PC-9 (cell line): ENCODE measurements at regions of chr4 and their contacts with region 1.

Region 1: GRCh38 chr4:40401631-40402030 is 66.5 kb downstream of the CHRNA9 start:
- DNase-seq: no peak
- H3K4me3 ChIP-seq: no peak overlapping the region
- H3K27ac ChIP-seq: no peak overlapping the region
- H3K4me1 ChIP-seq: peaks cover 50% of the 10 kb centered on the region
- H3K27me3 ChIP-seq: no peaks in the 10 kb centered on the region
- CTCF ChIP-seq: no peak

Region 2: DNA sequence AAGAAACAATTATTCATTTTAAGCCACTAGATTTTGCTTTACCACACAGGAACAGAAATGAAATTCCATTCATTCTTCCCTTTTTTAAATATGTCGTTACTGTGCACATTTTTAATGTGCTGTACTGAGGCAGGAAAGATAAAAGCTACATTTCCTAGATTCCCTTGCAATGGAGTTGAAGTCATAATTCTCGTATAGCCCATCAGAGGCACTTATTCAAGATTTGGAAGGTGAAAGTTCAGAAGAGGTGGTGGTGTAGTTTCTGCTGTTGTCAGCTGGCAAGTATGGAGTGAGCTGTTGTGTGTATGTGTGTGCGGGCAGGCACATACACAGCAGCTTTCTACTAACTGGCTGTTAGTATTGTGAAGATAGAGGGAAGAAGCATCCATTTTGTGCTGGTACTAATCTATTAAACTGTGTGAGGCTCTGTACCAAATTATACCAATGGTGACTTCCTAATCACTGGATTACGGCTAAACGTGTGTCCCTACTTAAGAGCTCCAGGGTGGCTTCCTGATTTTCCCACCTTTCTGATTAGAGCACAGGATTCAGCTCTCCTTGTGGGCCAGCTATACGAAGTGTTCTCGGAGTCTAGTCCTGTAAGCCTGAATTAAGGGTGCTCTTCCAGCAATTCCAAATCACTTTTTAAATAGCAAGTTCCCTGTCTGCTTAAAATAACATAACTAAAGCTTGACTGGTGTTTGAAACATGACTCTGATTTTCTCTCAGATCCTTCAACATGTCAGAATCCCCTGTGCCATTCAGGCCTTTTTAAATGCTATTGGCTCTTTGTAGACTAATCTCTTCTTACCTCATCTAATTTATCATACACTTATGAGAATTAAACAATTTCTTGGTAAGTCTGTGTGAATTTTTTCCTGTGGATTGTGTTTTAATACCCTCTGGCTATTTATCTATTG is 467.7 kb before region 1 on chr4:
- CTCF ChIA-PET with region 1: no interaction called
- POLR2A ChIA-PET with region 1: no interaction called
- intact Hi-C with region 1: no loop called
- DNase-seq: no peak
- H3K4me3 ChIP-seq: no peak overlapping the region
- H3K27ac ChIP-seq: no peak overlapping the region
- H3K4me1 ChIP-seq: no peaks in the 10 kb centered on the region
- H3K27me3 ChIP-seq: no peaks in the 10 kb centered on the region
- CTCF ChIP-seq: no peak

Region 3: GRCh38 chr4:40255393-40256281 is 146.0 kb before region 1 on chr4:
- CTCF ChIA-PET with region 1: no interaction called
- POLR2A ChIA-PET with region 1: no interaction called
- intact Hi-C with region 1: no loop called
- DNase-seq: peak; percentile 43 to 95
- H3K4me3 ChIP-seq: no peak overlapping the region
- H3K27ac ChIP-seq: peak overlapping the region; percentile 52
- H3K4me1 ChIP-seq: peaks cover 50% of the 10 kb centered on the region
- H3K27me3 ChIP-seq: no peaks in the 10 kb centered on the region
- CTCF ChIP-seq: no peak

Region 4: GRCh38 chr4:40333921-40334352 is 67.7 kb before region 1 on chr4:
- CTCF ChIA-PET with region 1: no interaction called
- POLR2A ChIA-PET with region 1: interaction called, 3 read pairs
- intact Hi-C with region 1: loop called (anchors 5 kb)
- DNase-seq: peak; percentile 67 to 93
- H3K4me3 ChIP-seq: peak overlapping the region; percentile 5; the same call in 1 of the 2 replicates
- H3K27ac ChIP-seq: peak overlapping the region; percentile 93
- H3K4me1 ChIP-seq: peaks cover 41% of the 10 kb centered on the region
- H3K27me3 ChIP-seq: no peaks in the 10 kb centered on the region
- CTCF ChIP-seq: no peak

Region 5: GRCh38 chr4:40363382-40363920 is 38.2 kb before region 1 on chr4:
- CTCF ChIA-PET with region 1: interaction called, 11 read pairs
- POLR2A ChIA-PET with region 1: interaction called, 7 read pairs
- intact Hi-C with region 1: loop called (anchors 1 kb)
- DNase-seq: peak; percentile 71 to 97
- H3K4me3 ChIP-seq: no peak overlapping the region; the same call in 1 of the 2 replicates
- H3K27ac ChIP-seq: peak overlapping the region; percentile 80
- H3K4me1 ChIP-seq: peaks cover 47% of the 10 kb centered on the region
- H3K27me3 ChIP-seq: no peaks in the 10 kb centered on the region
- CTCF ChIP-seq: no peak

Region 6: DNA sequence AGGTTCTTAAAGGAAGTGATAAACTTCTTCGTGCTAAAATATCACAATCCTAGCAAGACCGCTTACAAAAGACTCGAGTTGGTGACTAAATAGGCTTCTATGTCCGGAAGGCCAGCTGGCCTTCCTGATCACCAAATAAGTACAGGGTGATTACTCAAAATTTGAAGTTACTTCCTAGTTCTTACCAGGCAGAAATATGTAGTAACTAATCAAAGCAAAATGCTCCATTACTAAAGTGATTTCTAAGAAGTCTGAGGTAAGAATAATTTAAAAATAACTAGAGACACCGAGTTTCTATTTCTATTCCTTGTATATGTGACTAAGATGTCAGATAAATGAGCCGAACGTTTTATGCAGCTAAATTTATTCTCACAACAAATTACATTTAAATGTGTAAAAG is 410.3 kb after region 1 on chr4:
- CTCF ChIA-PET with region 1: no interaction called
- POLR2A ChIA-PET with region 1: interaction called, 15 read pairs
- intact Hi-C with region 1: no loop called
- DNase-seq: no peak
- H3K4me3 ChIP-seq: no peak overlapping the region
- H3K27ac ChIP-seq: no peak overlapping the region
- H3K4me1 ChIP-seq: no peaks in the 10 kb centered on the region
- H3K27me3 ChIP-seq: no peaks in the 10 kb centered on the region
- CTCF ChIP-seq: no peak

Region 7: DNA sequence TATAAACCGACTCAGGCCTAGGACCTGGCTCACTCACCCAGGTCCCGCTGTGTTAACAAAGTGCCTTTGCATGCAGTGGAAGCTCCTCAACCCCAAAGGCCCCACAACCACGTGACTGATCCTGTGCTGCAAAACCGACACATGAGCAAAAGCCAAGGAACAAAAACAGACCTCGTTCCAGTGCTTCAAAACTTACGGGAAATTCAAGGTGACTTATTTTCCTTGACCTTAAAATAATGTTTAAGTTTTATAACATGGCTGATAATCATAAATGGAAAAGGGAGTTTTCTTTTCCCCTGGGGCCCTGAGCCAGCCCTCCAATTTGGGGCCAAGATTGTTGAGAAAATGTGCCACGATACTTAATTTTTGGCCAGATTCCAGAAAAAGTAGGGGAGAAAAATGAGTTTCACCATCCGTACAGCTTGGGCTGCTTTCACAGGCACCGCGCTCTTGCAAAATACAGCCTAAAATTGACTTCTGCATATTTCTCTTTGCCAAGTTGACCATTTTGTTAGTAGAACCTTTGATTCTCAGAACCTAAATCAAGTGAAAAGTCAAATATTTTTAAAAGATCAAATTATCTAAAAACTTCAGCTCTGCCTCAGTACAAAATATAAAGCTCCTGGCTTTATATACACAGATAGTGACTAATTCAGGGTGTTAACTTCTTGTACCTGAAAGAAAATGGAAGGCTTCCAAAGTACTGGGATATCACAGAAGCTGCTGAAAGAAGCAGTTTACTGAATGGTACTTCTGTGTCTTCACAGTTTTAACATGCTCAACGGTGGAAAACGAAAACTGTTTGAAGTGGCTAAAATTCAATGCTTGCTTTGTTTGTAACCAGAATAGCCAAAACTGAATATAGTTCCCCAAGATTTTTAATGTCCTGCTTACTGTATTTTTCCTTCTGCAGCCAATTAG is 718.9 kb after region 1 on chr4:
- CTCF ChIA-PET with region 1: no interaction called
- POLR2A ChIA-PET with region 1: no interaction called
- intact Hi-C with region 1: no loop called
- DNase-seq: no peak
- H3K4me3 ChIP-seq: no peak overlapping the region
- H3K27ac ChIP-seq: no peak overlapping the region
- H3K4me1 ChIP-seq: no peaks in the 10 kb centered on the region; the same call in 1 of the 2 replicates
- H3K27me3 ChIP-seq: no peaks in the 10 kb centered on the region
- CTCF ChIP-seq: no peak